Heart right ventricle (tissue), 16 donors: ENCODE measurements at regions of chr7 and their contacts with region 1.

Region 1: GRCh38 chr7:5088906-5089305 is 43.2 kb downstream of the RBAK start:
- DNase-seq: no peak
- ATAC-seq: no peak
- H3K4me3 ChIP-seq: no peak overlapping the region
- H3K27ac ChIP-seq: no peak overlapping the region
- H3K4me1 ChIP-seq: peaks cover 0 to 5% (median 0%) of the 10 kb centered on the region in 9 donors
- H3K27me3 ChIP-seq: peaks cover 0 to 42% (median 30%) of the 10 kb centered on the region in 7 donors
- CTCF ChIP-seq: no peak

Region 2: GRCh38 chr7:4797858-4798705 is 290.8 kb before region 1 on chr7:
- intact Hi-C with region 1: loop called in 8 of 10 experiments (anchors 2 to 10 kb)
- DNase-seq: peak in 1 of 2 donors; percentile 72
- ATAC-seq: peak; percentile 43 to 76 (median 72)
- H3K4me3 ChIP-seq: no peak overlapping the region
- H3K27ac ChIP-seq: peak overlapping the region in 6 of 10 donors; percentile 25 to 67 (median 48)
- H3K4me1 ChIP-seq: peaks cover 0 to 32% (median 9%) of the 10 kb centered on the region in 9 donors
- H3K27me3 ChIP-seq: no peaks in the 10 kb centered on the region
- CTCF ChIP-seq: peak; percentile 72 to 98 (median 89)

Region 3: GRCh38 chr7:4849369-4849768 is 239.5 kb before region 1 on chr7:
- intact Hi-C with region 1: loop called in 3 of 10 experiments (anchors 5 to 10 kb)
- DNase-seq: no peak
- ATAC-seq: no peak
- H3K4me3 ChIP-seq: no peak overlapping the region
- H3K27ac ChIP-seq: no peak overlapping the region
- H3K4me1 ChIP-seq: peaks cover 0 to 12% (median 0%) of the 10 kb centered on the region in 9 donors
- H3K27me3 ChIP-seq: peaks cover 0 to 8% (median 0%) of the 10 kb centered on the region in 7 donors
- CTCF ChIP-seq: peak in 5 of 9 donors; percentile 13 to 42 (median 20)

Region 4: GRCh38 chr7:4973728-4974198 is 115.1 kb before region 1 on chr7:
- intact Hi-C with region 1: loop called in 5 of 10 experiments (anchors 5 to 10 kb)
- DNase-seq: peak; percentile 88 to 92
- ATAC-seq: peak; percentile 96 to 99 (median 98)
- H3K4me3 ChIP-seq: peak overlapping the region; percentile 73 to 92 (median 88)
- H3K27ac ChIP-seq: peak overlapping the region; percentile 60 to 92 (median 86)
- H3K4me1 ChIP-seq: peaks cover 0 to 20% (median 13%) of the 10 kb centered on the region in 9 donors
- H3K27me3 ChIP-seq: no peaks in the 10 kb centered on the region
- CTCF ChIP-seq: peak; percentile 71 to 95 (median 83)

Region 5: GRCh38 chr7:4995429-4995969 is 93.4 kb before region 1 on chr7:
- intact Hi-C with region 1: no loop called
- DNase-seq: no peak
- ATAC-seq: no peak
- H3K4me3 ChIP-seq: no peak overlapping the region
- H3K27ac ChIP-seq: no peak overlapping the region
- H3K4me1 ChIP-seq: no peaks in the 10 kb centered on the region
- H3K27me3 ChIP-seq: no peaks in the 10 kb centered on the region
- CTCF ChIP-seq: no peak